BJ (cell line): ENCODE measurements at regions of chr15 and their contacts with region 1.

Region 1: GRCh38 chr15:39756806-39757522 is 25.7 kb downstream of the FSIP1 start:
- DNase-seq: no peak
- H3K4me3 ChIP-seq: no peak overlapping the region
- H3K27me3 ChIP-seq: no peaks in the 10 kb centered on the region
- CTCF ChIP-seq: peak; percentile 67

Region 2: DNA sequence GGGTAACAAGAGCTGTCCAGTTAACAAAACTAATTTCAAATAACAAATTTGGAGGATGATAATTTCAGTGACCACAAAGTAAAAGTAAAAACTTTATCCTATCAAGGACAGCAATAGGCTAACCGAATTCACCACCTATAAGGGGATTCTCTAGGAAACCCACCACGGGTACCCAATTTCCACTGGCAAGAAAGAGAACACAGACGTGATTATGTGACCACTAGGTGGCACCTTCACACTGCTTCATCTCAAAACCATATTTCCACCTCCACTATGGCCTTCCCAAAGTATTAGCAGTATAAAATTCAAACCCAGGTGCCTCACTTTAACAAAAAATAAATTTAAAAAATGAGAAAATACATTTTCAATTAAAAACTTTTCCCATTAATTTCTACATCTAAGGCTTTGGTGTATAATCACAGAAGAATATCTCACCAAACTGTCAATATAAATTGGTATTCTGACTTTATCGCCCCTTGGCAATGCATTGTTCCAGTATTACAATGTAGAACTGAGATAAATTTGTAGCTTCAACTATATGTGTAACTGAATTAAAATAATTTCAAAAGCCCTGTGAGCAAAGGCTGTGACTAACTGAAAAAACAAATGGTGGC is 70.9 kb before region 1 on chr15:
- CTCF ChIA-PET with region 1: interaction called, 162 read pairs
- POLR2A ChIA-PET with region 1: no interaction called
- DNase-seq: no peak
- H3K4me3 ChIP-seq: no peak overlapping the region
- H3K27me3 ChIP-seq: no peaks in the 10 kb centered on the region
- CTCF ChIP-seq: peak; percentile 63

Region 3: GRCh38 chr15:39692356-39693327 is 64.3 kb before region 1 on chr15:
- CTCF ChIA-PET with region 1: interaction called, 162 read pairs
- POLR2A ChIA-PET with region 1: no interaction called
- DNase-seq: no peak
- H3K4me3 ChIP-seq: no peak overlapping the region
- H3K27me3 ChIP-seq: no peaks in the 10 kb centered on the region
- CTCF ChIP-seq: no peak

Region 4: GRCh38 chr15:39770748-39771689 is 14.1 kb after region 1 on chr15:
- CTCF ChIA-PET with region 1: interaction called, 33 read pairs
- POLR2A ChIA-PET with region 1: no interaction called
- DNase-seq: peak; percentile 79
- H3K4me3 ChIP-seq: no peak overlapping the region
- H3K27me3 ChIP-seq: no peaks in the 10 kb centered on the region
- CTCF ChIP-seq: peak; percentile 9; the same call in 1 of the 2 replicates